ENCODE measurements at regions of chr19 and their contacts with region 1.

Region 1: GRCh38 chr19:10478903-10479384 is 24.2 kb downstream of the KEAP1 start:
- DNase-seq: peak; percentile 90
- ATAC-seq: peak; percentile 91
- H3K4me3 ChIP-seq: peak overlapping the region in 4 of 5 experiments; percentile 5 to 41 (median 16)
- H3K4me3 Mint-ChIP-seq: peak overlapping the region; percentile 55
- H3K27ac ChIP-seq: no peak overlapping the region
- H3K27ac Mint-ChIP-seq: peak overlapping the region; percentile 37
- H3K4me1 ChIP-seq: peaks cover 9 to 13% of the 10 kb centered on the region in 2 donors
- H3K4me1 Mint-ChIP-seq: peaks cover 16% of the 10 kb centered on the region
- H3K27me3 ChIP-seq: no peaks in the 10 kb centered on the region
- H3K27me3 Mint-ChIP-seq: no peaks in the 10 kb centered on the region
- CTCF ChIP-seq: peak; percentile 80

Region 2: DNA sequence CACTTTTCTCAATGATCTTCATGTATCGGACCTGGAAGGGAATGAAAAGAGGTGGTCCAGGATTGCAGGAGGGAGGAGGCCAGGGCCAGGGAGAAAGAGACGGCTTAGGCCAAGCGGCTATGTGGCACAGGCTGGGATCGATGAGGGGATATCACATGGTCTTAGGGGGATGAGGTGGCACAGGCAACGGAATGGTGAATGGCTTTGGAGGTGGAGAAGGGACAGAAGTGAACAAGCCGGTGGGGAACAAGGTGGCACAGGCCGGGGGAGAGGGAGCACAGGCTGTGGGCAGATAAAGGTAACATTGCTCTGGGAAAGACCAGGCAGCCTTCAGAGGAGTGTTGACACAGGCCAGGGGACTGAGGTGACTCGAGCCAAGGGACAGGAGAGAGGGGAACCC is 95.5 kb after region 1 on chr19:
- CTCF ChIA-PET with region 1: interaction called, 10 read pairs
- POLR2A ChIA-PET with region 1: no interaction called
- intact Hi-C with region 1: loop called (anchors 1 kb)
- DNase-seq: no peak
- ATAC-seq: no peak
- H3K4me3 ChIP-seq: no peak overlapping the region
- H3K4me3 Mint-ChIP-seq: no peak overlapping the region
- H3K27ac ChIP-seq: no peak overlapping the region
- H3K27ac Mint-ChIP-seq: no peak overlapping the region
- H3K4me1 ChIP-seq: peaks cover under 1 to 7% of the 10 kb centered on the region in 2 donors
- H3K4me1 Mint-ChIP-seq: peaks cover 6% of the 10 kb centered on the region
- H3K27me3 ChIP-seq: no peaks in the 10 kb centered on the region
- H3K27me3 Mint-ChIP-seq: no peaks in the 10 kb centered on the region
- CTCF ChIP-seq: no peak

Measured in B cell (primary cell).